CD4-positive, alpha-beta T cell (primary cell): ENCODE measurements at regions of chr1 and their contacts with region 1.

Region 1: DNA sequence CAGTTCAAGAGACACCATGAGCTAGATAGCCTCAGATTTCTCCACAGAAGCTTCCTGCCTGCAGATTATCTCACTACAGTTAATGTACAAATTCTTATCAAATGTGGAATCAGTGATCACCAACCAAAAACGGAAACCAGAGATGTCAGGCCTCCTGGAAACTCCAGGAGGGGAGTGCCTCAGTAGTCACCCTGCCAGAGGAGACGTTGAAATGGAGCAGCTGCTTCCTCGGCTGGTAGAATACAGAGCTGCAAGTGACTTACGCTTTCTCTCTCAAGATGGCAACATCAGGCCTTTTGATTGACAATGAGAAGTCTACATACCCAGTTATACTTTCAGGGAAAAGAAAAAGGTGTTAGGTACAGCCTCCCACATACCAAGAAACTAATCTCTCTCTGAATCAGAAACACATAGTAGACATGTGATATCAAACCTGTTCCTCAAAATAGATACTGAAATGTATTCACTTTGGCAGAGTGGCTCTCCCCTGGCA is 52.2 kb downstream of the ACP6 start:
- DNase-seq: peak in 6 of 14 experiments; percentile 12 to 79 (median 46)
- ATAC-seq: peak; percentile 82
- H3K4me3 ChIP-seq: no peak overlapping the region
- H3K4me3 Mint-ChIP-seq: no peak overlapping the region
- H3K27ac ChIP-seq: peak overlapping the region in 1 of 2 donors; percentile 19
- H3K27ac Mint-ChIP-seq: peak overlapping the region; percentile 72
- H3K4me1 ChIP-seq: peaks cover 19% of the 10 kb centered on the region
- H3K4me1 Mint-ChIP-seq: peaks cover 27% of the 10 kb centered on the region
- H3K27me3 ChIP-seq: no peaks in the 10 kb centered on the region
- H3K27me3 Mint-ChIP-seq: no peaks in the 10 kb centered on the region
- CTCF ChIP-seq: no peak

Region 2: DNA sequence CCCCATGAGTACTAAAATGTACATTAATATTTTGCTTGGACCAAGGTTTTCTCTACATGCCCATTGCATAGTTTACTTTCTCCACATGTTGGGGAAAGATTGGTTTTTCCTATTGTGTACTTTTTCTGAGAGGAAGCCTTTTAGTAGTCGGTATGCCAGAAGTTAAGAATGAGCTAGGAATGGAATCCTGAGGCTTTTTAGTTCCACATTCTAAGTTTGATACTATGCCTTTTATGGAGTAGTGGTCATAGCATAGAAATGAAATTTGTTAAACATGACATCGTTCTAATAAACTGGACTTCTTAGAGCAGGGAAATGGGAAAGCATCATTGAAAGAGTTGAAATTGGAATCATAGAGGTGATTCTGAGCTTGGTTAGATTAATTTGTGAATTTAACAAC is 12.5 kb before region 1 on chr1:
- CTCF ChIA-PET with region 1: no interaction called
- POLR2A ChIA-PET with region 1: interaction called, 5 read pairs
- intact Hi-C with region 1: loop called in 1 of 2 experiments (anchors 2 kb)
- DNase-seq: no peak
- ATAC-seq: no peak
- H3K4me3 ChIP-seq: no peak overlapping the region
- H3K4me3 Mint-ChIP-seq: no peak overlapping the region
- H3K27ac ChIP-seq: no peak overlapping the region
- H3K27ac Mint-ChIP-seq: no peak overlapping the region
- H3K4me1 ChIP-seq: peaks cover 4% of the 10 kb centered on the region
- H3K4me1 Mint-ChIP-seq: peaks cover 28% of the 10 kb centered on the region
- H3K27me3 ChIP-seq: no peaks in the 10 kb centered on the region
- H3K27me3 Mint-ChIP-seq: no peaks in the 10 kb centered on the region
- CTCF ChIP-seq: no peak